ENCODE measurements at regions of chr6 and their contacts with region 1.

Region 1: DNA sequence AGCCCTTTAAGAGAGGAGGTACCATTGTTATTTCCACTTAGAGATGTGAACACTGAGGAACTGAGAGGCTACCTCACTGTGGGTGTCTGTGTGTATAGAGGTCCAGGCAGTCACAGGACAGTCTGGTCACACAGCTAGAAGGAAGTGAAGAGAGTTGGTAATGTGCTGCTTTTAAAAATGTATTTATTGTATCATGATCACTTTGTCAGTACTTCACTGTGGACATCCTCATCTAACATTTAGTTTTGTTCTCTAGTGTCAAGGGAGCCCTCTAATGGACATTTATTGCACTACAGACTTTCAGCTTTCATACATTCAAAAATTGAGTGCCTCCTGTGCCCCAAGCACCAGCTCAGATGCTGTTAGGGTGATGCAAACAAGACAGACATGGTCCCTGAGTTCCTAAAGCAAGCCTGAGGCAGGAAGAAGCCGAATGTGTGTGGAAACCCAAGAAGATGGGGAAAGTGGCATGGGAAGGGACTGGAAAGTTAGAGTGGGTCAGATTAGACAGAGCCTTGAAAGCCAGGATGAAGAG is 123.0 kb downstream of the SLC16A10 start:
- DNase-seq: peak; percentile 13
- ATAC-seq: peak; percentile 78
- H3K4me3 Mint-ChIP-seq: no peak overlapping the region
- H3K27ac Mint-ChIP-seq: no peak overlapping the region
- H3K4me1 Mint-ChIP-seq: no peaks in the 10 kb centered on the region
- H3K27me3 Mint-ChIP-seq: no peaks in the 10 kb centered on the region

Region 2: DNA sequence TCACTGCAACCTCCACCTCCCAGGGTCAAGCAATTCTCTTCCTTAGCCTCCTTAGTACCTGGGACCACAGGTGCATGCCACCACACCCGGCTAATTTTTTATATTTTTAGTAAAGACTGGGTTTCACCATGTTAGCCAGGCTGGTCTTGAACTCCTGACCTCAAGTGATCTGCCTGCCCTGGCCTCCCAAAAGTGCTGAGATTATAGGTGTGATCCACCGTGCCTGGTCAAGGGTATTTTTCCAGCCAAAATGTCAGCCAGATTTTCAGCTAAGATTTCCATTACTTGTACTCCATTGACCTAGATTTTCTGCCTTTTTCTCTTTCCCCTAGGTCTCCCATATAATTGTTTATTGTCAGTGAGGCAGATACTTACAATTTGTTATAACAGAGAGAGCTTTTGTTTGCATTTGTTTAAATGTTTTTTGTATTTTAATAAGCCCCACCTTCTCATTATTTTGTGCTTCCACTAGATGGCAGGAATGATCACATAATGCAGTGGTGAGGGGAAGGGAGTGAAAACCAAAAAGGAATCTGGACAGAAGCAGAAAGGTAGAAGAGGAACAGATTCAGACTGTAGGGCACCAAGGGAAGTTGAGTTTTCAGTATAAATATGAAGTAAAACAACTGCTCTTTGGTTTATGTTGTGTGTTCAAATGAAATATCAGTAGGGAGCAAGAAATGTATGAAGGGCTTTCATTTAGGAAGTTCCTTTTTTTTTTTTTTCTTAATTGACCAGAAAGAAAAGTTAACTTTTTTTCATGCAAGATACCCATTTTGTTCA is 198.7 kb before region 1 on chr6:
- CTCF ChIA-PET with region 1: interaction called, 54 read pairs
- POLR2A ChIA-PET with region 1: no interaction called
- intact Hi-C with region 1: loop called (anchors 1 kb)
- DNase-seq: no peak
- ATAC-seq: peak; percentile 73
- H3K4me3 Mint-ChIP-seq: no peak overlapping the region
- H3K27ac Mint-ChIP-seq: no peak overlapping the region
- H3K4me1 Mint-ChIP-seq: peaks cover 4% of the 10 kb centered on the region
- H3K27me3 Mint-ChIP-seq: no peaks in the 10 kb centered on the region

Region 3: GRCh38 chr6:111057074-111057752 is 153.0 kb before region 1 on chr6:
- CTCF ChIA-PET with region 1: interaction called, 42 read pairs
- POLR2A ChIA-PET with region 1: interaction called, 3 read pairs
- intact Hi-C with region 1: loop called (anchors 1 kb)
- DNase-seq: peak; percentile 42
- ATAC-seq: peak; percentile 72
- H3K4me3 Mint-ChIP-seq: no peak overlapping the region
- H3K27ac Mint-ChIP-seq: no peak overlapping the region
- H3K4me1 Mint-ChIP-seq: peaks cover 3% of the 10 kb centered on the region
- H3K27me3 Mint-ChIP-seq: no peaks in the 10 kb centered on the region

Measured in activated CD4-positive, alpha-beta T cell treated with anti-CD3 and anti-CD28 coated beads for 36 hours (primary cell).